ENCODE measurements at regions of chr22 and their contacts with region 1.

Region 1: GRCh38 chr22:19629720-19630419 is 84.4 kb upstream of the SEPTIN5 start:
- DNase-seq: no peak
- ATAC-seq: peak; percentile 98
- H3K4me3 ChIP-seq: no peak overlapping the region
- H3K27ac ChIP-seq: no peak overlapping the region
- H3K4me1 ChIP-seq: no peaks in the 10 kb centered on the region
- H3K27me3 ChIP-seq: 0 out of 4 replicates have a peak, but pooled peaks cover 0 to 2% of the 10 kb centered on the region in 2 experiments
- CTCF ChIP-seq: peak; percentile 89 to 98 (median 92)
- EP300 ChIP-seq: no peak
- POLR2A ChIP-seq: no peak
- RAD21 ChIP-seq: peak; percentile 94

Region 2: DNA sequence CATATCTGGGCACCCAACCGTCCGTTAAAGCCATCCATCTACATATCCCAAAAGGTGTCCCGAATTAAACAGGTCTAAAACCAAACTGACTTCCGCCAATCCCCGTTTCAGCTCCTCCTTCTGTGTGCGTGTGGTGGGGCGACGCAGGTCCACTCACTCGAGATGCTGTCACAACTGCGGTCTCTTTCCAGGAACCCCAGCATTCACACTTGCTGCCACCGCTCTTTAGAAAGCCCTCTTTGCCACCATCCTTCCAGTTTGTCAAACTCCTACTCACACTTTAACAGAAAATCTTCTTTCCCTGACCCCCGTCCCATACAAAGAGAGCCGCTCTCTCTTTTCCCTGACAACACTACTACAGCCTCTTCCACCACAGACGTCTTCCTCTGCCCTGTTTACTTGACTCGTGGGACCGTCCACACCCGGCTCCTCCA is 485.9 kb before region 1 on chr22:
- CTCF ChIA-PET with region 1: interaction called, 22 read pairs
- POLR2A ChIA-PET with region 1: no interaction called
- RAD21 ChIA-PET with region 1: interaction called, 12 read pairs
- SMC1A ChIA-PET with region 1: interaction called, 7 read pairs
- in situ Hi-C with region 1: no loop called
- intact Hi-C with region 1: loop called (anchors 1 kb)
- DNase-seq: no peak
- ATAC-seq: peak; percentile 63
- H3K4me3 ChIP-seq: peak overlapping the region; percentile 100
- H3K27ac ChIP-seq: peak overlapping the region; percentile 72
- H3K4me1 ChIP-seq: peaks cover 4% of the 10 kb centered on the region
- H3K27me3 ChIP-seq: peaks cover 0 to 8% of the 10 kb centered on the region in 2 experiments; a peak in 3 of 4 replicates
- CTCF ChIP-seq: no peak
- EP300 ChIP-seq: no peak
- POLR2A ChIP-seq: no peak
- RAD21 ChIP-seq: no peak

Region 3: GRCh38 chr22:19214078-19214473 is 415.8 kb before region 1 on chr22:
- CTCF ChIA-PET with region 1: interaction called, 4 read pairs
- POLR2A ChIA-PET with region 1: no interaction called
- RAD21 ChIA-PET with region 1: interaction called, 3 read pairs
- SMC1A ChIA-PET with region 1: no interaction called
- in situ Hi-C with region 1: no loop called
- intact Hi-C with region 1: loop called (anchors 1 kb)
- DNase-seq: no peak
- ATAC-seq: no peak
- H3K4me3 ChIP-seq: no peak overlapping the region
- H3K27ac ChIP-seq: no peak overlapping the region
- H3K4me1 ChIP-seq: no peaks in the 10 kb centered on the region; the same call in 1 of the 2 replicates
- H3K27me3 ChIP-seq: peaks cover 0 to 3% of the 10 kb centered on the region in 2 experiments; a peak in 2 of 4 replicates
- CTCF ChIP-seq: no peak
- EP300 ChIP-seq: no peak
- POLR2A ChIP-seq: no peak
- RAD21 ChIP-seq: no peak

Region 4: DNA sequence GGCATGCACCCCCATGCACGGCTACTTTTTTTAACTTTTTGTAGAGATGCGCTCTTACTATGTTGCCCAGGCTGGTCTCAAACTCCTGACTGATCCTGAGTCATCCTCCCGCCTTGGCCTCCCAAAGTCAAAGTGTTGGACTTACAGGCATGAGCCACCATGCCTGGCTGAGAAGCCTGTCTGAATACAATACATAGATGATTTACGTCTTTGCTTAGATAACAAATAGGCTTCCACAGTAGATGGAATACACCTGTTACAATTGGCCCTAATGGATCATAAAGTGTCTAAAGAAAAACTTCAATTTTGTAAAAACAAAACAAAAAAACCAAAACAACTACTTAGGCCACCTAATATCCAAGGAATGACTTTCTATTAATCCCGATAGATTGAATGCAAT is 325.3 kb before region 1 on chr22:
- CTCF ChIA-PET with region 1: interaction called, 35 read pairs
- POLR2A ChIA-PET with region 1: no interaction called
- RAD21 ChIA-PET with region 1: interaction called, 9 read pairs
- SMC1A ChIA-PET with region 1: interaction called, 9 read pairs
- in situ Hi-C with region 1: no loop called
- intact Hi-C with region 1: loop called (anchors 5 kb)
- DNase-seq: no peak
- ATAC-seq: no peak
- H3K4me3 ChIP-seq: no peak overlapping the region
- H3K27ac ChIP-seq: no peak overlapping the region
- H3K4me1 ChIP-seq: no peaks in the 10 kb centered on the region
- H3K27me3 ChIP-seq: no peaks in the 10 kb centered on the region
- CTCF ChIP-seq: no peak
- EP300 ChIP-seq: no peak
- POLR2A ChIP-seq: no peak
- RAD21 ChIP-seq: no peak

Region 5: GRCh38 chr22:19479357-19480172 is 150.3 kb before region 1 on chr22 and contains the start of gene CDC45:
- CTCF ChIA-PET with region 1: interaction called, 26 read pairs
- POLR2A ChIA-PET with region 1: no interaction called
- RAD21 ChIA-PET with region 1: interaction called, 17 read pairs
- SMC1A ChIA-PET with region 1: interaction called, 7 read pairs
- in situ Hi-C with region 1: no loop called
- intact Hi-C with region 1: loop called (anchors 10 kb)
- DNase-seq: peak; percentile 93
- ATAC-seq: peak; percentile 95
- H3K4me3 ChIP-seq: peak within 1 kb of the TSS; percentile 97
- H3K27ac ChIP-seq: peak within 1 kb of the TSS; percentile 97
- H3K4me1 ChIP-seq: no peaks in the 10 kb centered on the region
- H3K27me3 ChIP-seq: no peaks in the 10 kb centered on the region
- CTCF ChIP-seq: no peak
- EP300 ChIP-seq: no peak
- POLR2A ChIP-seq: peak; percentile 80
- RAD21 ChIP-seq: no peak
- polyA plus RNA-seq, gene CDC45: 42.8 to 51.2 TPM

Region 6: GRCh38 chr22:19495562-19496323 is 134.1 kb before region 1 on chr22:
- CTCF ChIA-PET with region 1: interaction called, 10 read pairs
- POLR2A ChIA-PET with region 1: no interaction called
- RAD21 ChIA-PET with region 1: interaction called, 3 read pairs
- SMC1A ChIA-PET with region 1: interaction called, 3 read pairs
- in situ Hi-C with region 1: no loop called
- intact Hi-C with region 1: loop called (anchors 2 kb)
- DNase-seq: no peak
- ATAC-seq: no peak
- H3K4me3 ChIP-seq: no peak overlapping the region
- H3K27ac ChIP-seq: no peak overlapping the region
- H3K4me1 ChIP-seq: no peaks in the 10 kb centered on the region
- H3K27me3 ChIP-seq: no peaks in the 10 kb centered on the region
- CTCF ChIP-seq: 0 out of 6 replicates have a peak, but pooled peaks of 1 of the 3 experiments have one; percentile 4
- EP300 ChIP-seq: no peak
- POLR2A ChIP-seq: no peak
- RAD21 ChIP-seq: no peak

Region 7: DNA sequence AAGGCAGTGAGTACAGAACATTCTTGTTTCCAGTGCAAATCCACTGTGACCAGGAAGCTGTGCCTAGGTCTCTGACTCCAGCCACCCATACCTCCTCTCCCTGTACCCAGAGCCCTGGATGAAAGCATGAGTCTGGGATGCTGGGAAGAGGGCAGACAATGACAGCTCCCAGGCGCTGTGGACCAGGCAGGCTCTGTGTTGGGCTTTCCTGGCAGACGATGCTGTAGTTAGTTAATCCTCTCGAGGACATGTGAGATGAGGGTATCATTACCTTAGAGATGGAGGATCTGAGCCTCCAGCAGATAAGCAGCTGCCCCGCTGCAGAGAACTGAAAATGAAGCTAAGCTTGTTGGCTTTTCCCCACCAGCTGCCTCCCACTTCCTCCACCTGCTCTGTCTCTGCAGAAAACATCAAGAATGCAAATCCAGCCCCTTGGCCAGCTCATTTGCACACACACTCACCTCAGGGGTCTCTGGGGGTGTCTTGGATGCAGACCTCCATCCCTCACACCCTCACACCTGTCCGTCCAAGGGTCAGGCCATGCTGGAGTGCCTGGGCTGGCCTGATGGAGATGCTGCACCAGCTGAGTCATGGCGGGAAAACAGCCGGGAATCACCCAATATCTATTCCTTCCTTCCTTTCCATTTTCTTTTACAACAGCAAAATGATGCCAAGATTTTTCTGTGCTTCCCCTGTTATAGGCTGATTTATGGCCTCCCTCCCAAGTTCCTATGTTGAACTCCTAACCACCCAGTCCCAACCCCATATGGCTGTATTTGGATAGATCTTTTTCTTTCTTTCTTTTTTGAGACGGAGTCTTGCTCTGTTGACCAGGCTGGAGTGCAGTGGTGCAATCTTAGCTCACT is 10.5 kb before region 1 on chr22:
- CTCF ChIA-PET with region 1: interaction called, 10 read pairs
- POLR2A ChIA-PET with region 1: no interaction called
- RAD21 ChIA-PET with region 1: interaction called, 6 read pairs
- SMC1A ChIA-PET with region 1: interaction called, 3 read pairs
- in situ Hi-C with region 1: no loop called
- intact Hi-C with region 1: no loop called
- DNase-seq: peak; percentile 43
- ATAC-seq: peak; percentile 79
- H3K4me3 ChIP-seq: 0 out of 2 replicates have a peak overlapping the region, but pooled peaks have one; percentile 11
- H3K27ac ChIP-seq: peak overlapping the region; percentile 41
- H3K4me1 ChIP-seq: peaks cover 35% of the 10 kb centered on the region
- H3K27me3 ChIP-seq: no peaks in the 10 kb centered on the region
- CTCF ChIP-seq: no peak
- EP300 ChIP-seq: peak in 1 of 2 experiments; percentile 56; a peak in 2 of 4 replicates
- POLR2A ChIP-seq: no peak
- RAD21 ChIP-seq: no peak

Region 8: GRCh38 chr22:19648419-19648929 is 18.6 kb after region 1 on chr22:
- CTCF ChIA-PET with region 1: no interaction called
- POLR2A ChIA-PET with region 1: no interaction called
- RAD21 ChIA-PET with region 1: no interaction called
- SMC1A ChIA-PET with region 1: no interaction called
- in situ Hi-C with region 1: no loop called
- intact Hi-C with region 1: no loop called
- DNase-seq: no peak
- ATAC-seq: no peak
- H3K4me3 ChIP-seq: no peak overlapping the region
- H3K27ac ChIP-seq: no peak overlapping the region
- H3K4me1 ChIP-seq: no peaks in the 10 kb centered on the region
- H3K27me3 ChIP-seq: no peaks in the 10 kb centered on the region
- CTCF ChIP-seq: no peak
- EP300 ChIP-seq: no peak
- POLR2A ChIP-seq: no peak
- RAD21 ChIP-seq: no peak

Region 9: GRCh38 chr22:19772422-19773324 is 142.8 kb after region 1 on chr22:
- CTCF ChIA-PET with region 1: no interaction called
- POLR2A ChIA-PET with region 1: no interaction called
- RAD21 ChIA-PET with region 1: no interaction called
- SMC1A ChIA-PET with region 1: no interaction called
- in situ Hi-C with region 1: no loop called
- intact Hi-C with region 1: no loop called
- DNase-seq: peak; percentile 61
- ATAC-seq: peak; percentile 90
- H3K4me3 ChIP-seq: no peak overlapping the region
- H3K27ac ChIP-seq: no peak overlapping the region
- H3K4me1 ChIP-seq: peaks cover 9% of the 10 kb centered on the region
- H3K27me3 ChIP-seq: peaks cover 0 to 5% of the 10 kb centered on the region in 2 experiments; a peak in 3 of 4 replicates
- CTCF ChIP-seq: peak; percentile 15 to 42 (median 26); a peak in 3 of 6 replicates
- EP300 ChIP-seq: peak in 1 of 2 experiments; percentile 37; a peak in 1 of 4 replicates
- POLR2A ChIP-seq: no peak
- RAD21 ChIP-seq: no peak

Region 10: GRCh38 chr22:20021196-20022181 is 391.6 kb after region 1 on chr22:
- CTCF ChIA-PET with region 1: no interaction called
- POLR2A ChIA-PET with region 1: no interaction called
- RAD21 ChIA-PET with region 1: no interaction called
- SMC1A ChIA-PET with region 1: no interaction called
- in situ Hi-C with region 1: no loop called
- intact Hi-C with region 1: no loop called
- DNase-seq: no peak
- ATAC-seq: peak; percentile 14
- H3K4me3 ChIP-seq: peak overlapping the region; percentile 99
- H3K27ac ChIP-seq: peak overlapping the region; percentile 81
- H3K4me1 ChIP-seq: peaks cover 13% of the 10 kb centered on the region
- H3K27me3 ChIP-seq: peaks cover 0 to 3% of the 10 kb centered on the region in 2 experiments; a peak in 2 of 4 replicates
- CTCF ChIP-seq: no peak
- EP300 ChIP-seq: no peak
- POLR2A ChIP-seq: no peak
- RAD21 ChIP-seq: no peak

Measured in GM12878 (cell line).